Activated CD4-positive, alpha-beta memory T cell treated with anti-CD3 and anti-CD28 coated beads for 36 hours (primary cell): ENCODE measurements at regions of chr1 and their contacts with region 1.

Region 1: GRCh38 chr1:117501281-117501680 is 104.6 kb upstream of the TENT5C start:
- DNase-seq: no peak
- H3K4me3 Mint-ChIP-seq: no peak overlapping the region
- H3K27ac Mint-ChIP-seq: no peak overlapping the region
- H3K4me1 Mint-ChIP-seq: no peaks in the 10 kb centered on the region
- H3K27me3 Mint-ChIP-seq: no peaks in the 10 kb centered on the region

Region 2: DNA sequence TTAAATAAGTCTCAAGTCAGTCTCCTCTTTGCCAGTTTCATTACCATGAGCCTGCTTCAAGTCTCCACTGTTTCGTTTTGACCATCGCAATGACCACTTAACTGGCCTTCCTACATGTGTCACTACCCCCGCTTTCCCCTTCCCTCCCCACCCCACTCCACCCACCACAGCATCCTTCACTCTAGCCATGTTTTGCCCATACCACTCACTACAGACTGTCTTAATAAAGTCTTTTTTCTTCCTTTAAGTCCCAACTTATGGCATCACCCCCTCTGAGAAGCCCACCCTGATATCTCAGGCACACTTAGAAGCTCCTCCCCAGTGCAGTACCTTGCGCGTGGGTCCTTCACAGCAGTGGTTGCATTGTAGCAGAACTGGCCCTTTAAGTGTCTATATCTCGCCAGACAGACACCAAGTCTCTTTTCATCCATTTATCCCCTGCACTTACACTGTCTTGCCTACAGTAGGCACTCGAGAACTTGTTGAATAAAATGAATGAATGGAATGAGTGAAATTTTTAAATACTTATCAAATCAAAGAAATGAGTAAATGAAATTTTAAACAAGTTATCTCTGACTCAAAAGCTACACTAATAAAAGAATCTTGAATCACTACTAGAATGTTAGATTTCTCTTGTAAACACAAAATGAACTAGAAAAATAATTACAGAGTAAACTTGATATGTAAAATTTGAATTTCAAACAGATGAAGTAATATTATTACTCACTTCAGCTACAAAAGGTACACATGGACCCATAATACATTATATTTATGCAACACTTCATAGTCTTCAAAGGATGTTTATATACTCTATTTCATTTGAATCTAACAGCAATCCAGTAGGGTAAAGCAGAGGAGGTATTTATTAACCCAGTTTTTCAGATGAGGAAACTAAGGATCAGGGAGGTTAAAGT is 188.8 kb before region 1 on chr1:
- CTCF ChIA-PET with region 1: no interaction called
- POLR2A ChIA-PET with region 1: no interaction called
- intact Hi-C with region 1: loop called (anchors 10 kb)
- DNase-seq: no peak
- H3K4me3 Mint-ChIP-seq: no peak overlapping the region
- H3K27ac Mint-ChIP-seq: no peak overlapping the region
- H3K4me1 Mint-ChIP-seq: peaks cover 13% of the 10 kb centered on the region
- H3K27me3 Mint-ChIP-seq: peaks cover 2% of the 10 kb centered on the region

Region 3: GRCh38 chr1:117453958-117454357 is 47.3 kb before region 1 on chr1:
- CTCF ChIA-PET with region 1: no interaction called
- POLR2A ChIA-PET with region 1: no interaction called
- intact Hi-C with region 1: no loop called
- DNase-seq: no peak
- H3K4me3 Mint-ChIP-seq: no peak overlapping the region
- H3K27ac Mint-ChIP-seq: no peak overlapping the region
- H3K4me1 Mint-ChIP-seq: no peaks in the 10 kb centered on the region
- H3K27me3 Mint-ChIP-seq: no peaks in the 10 kb centered on the region

Region 4: DNA sequence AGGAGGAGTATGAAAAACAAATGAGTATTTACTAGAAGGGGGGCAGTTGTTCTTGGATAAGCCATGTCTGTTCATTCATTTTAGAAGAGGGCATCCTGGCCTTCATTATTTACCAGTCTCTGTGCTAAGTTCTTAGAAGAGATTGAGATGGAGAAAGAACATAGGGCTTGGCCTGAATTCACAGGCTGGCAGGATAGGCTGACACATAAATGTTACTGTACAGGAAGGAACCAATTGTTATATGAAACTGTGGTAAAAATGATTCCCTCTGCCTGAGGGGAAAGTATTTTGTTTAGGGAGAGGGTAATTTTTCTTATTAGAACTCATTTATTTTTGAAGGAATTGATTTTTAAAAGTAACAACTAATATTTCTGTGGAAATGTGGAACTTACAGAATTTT is 34.5 kb before region 1 on chr1:
- CTCF ChIA-PET with region 1: no interaction called
- POLR2A ChIA-PET with region 1: no interaction called
- intact Hi-C with region 1: no loop called
- DNase-seq: no peak
- H3K4me3 Mint-ChIP-seq: no peak overlapping the region
- H3K27ac Mint-ChIP-seq: no peak overlapping the region
- H3K4me1 Mint-ChIP-seq: no peaks in the 10 kb centered on the region
- H3K27me3 Mint-ChIP-seq: no peaks in the 10 kb centered on the region